Ovary (tissue), 10 donors: ENCODE measurements at regions of chr7 and their contacts with region 1.

Region 1: GRCh38 chr7:150927956-150928344 is 50.2 kb downstream of the KCNH2 start:
- DNase-seq: no peak
- H3K4me3 ChIP-seq: no peak overlapping the region
- H3K27ac ChIP-seq: no peak overlapping the region
- H3K4me1 ChIP-seq: no peaks in the 10 kb centered on the region
- H3K27me3 ChIP-seq: no peaks in the 10 kb centered on the region
- CTCF ChIP-seq: no peak
- EP300 ChIP-seq: no peak
- POLR2A ChIP-seq: no peak

Region 2: DNA sequence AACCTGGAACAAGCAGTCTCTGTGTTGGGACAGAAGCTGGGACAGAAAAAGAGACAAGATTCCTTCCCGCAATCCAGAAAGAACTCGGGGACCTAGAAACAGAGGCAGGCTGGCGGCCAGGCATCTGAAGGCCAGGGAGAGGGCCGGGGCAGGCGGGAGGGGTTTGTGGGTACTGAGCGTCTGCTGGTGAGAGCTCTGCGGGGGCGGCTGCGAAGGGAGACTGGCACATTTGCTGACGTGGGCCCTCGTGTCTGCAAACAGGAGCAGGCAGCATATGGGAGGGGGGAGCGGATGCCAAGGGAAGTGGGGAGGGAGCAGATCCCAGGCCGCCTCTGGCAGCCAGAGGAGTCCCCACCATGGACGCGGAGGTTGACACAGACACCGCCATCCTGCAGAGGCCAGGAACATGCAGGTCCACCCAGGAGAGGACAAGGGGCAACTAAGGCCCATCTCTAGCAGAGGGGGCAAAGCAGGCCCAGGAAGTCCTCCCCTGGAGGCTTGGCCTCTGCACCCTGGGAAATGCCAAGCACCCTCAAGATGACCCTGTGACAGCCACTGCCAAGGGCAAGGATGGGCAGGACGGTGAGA is 18.0 kb after region 1 on chr7:
- intact Hi-C with region 1: loop called in 1 of 4 experiments (anchors 1 kb)
- DNase-seq: peak in 1 of 5 donors; percentile 37
- H3K4me3 ChIP-seq: no peak overlapping the region
- H3K27ac ChIP-seq: no peak overlapping the region
- H3K4me1 ChIP-seq: no peaks in the 10 kb centered on the region
- H3K27me3 ChIP-seq: no peaks in the 10 kb centered on the region
- CTCF ChIP-seq: no peak
- EP300 ChIP-seq: no peak
- POLR2A ChIP-seq: no peak